GM12878 (cell line): ENCODE measurements at regions of chr2 and their contacts with region 1.

Region 1: DNA sequence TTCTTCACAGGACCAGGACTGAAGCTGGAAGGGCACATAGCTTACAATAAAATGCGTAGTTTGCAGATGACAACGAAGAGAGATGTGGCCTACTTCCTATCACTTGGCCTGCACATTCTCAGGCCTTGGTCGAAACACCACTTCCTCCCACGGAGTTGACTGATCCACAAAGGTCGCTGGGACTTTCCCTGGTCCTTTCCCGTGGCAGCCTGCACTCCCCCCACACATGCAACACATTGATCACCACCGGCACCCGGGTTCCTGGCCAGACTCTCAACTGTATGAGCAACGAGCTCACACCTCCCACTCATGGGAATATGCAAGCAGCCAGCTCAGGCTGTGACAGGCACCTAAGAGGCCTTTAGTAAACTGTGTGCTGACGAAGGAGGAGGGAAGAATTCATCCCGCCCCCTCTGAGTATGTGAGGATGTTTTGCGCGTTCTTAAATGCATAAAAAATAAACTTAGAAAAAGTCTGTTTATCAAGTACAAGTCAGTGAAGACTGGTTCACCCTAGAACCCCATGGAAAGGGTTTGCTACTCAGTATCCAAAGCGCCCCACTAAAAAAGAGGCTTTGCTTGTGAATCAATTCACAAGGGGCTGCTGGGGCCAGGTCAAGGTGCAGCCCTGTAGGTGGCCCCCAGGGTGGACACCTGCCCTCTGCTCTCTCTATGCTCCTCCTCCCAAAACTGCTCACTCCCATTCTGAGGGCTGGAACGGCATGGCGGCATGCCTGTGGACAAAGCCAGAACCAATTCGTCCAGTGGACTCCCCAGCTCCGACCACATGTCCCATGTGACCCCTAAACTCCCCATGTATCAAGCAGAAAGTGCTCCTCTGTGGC is 154.3 kb downstream of the EIPR1 start:
- DNase-seq: peak; percentile 91
- ATAC-seq: peak; percentile 94
- H3K4me3 ChIP-seq: no peak overlapping the region
- H3K27ac ChIP-seq: peak overlapping the region; percentile 89
- H3K4me1 ChIP-seq: peaks cover 20% of the 10 kb centered on the region
- H3K27me3 ChIP-seq: no peaks in the 10 kb centered on the region
- CTCF ChIP-seq: no peak
- EP300 ChIP-seq: peak; percentile 80 to 87; a peak in 3 of 4 replicates
- POLR2A ChIP-seq: peak; percentile 57
- RAD21 ChIP-seq: peak; percentile 12; the same call in 1 of the 2 replicates

Region 2: GRCh38 chr2:2974982-2975381 is 248.3 kb before region 1 on chr2:
- CTCF ChIA-PET with region 1: no interaction called
- POLR2A ChIA-PET with region 1: no interaction called
- RAD21 ChIA-PET with region 1: no interaction called
- SMC1A ChIA-PET with region 1: no interaction called
- in situ Hi-C with region 1: no loop called
- intact Hi-C with region 1: no loop called
- DNase-seq: no peak
- ATAC-seq: no peak
- H3K4me3 ChIP-seq: no peak overlapping the region
- H3K27ac ChIP-seq: no peak overlapping the region
- H3K4me1 ChIP-seq: no peaks in the 10 kb centered on the region
- H3K27me3 ChIP-seq: no peaks in the 10 kb centered on the region; a peak in 1 of 4 replicates
- CTCF ChIP-seq: no peak
- EP300 ChIP-seq: no peak
- POLR2A ChIP-seq: no peak
- RAD21 ChIP-seq: no peak

Region 3: DNA sequence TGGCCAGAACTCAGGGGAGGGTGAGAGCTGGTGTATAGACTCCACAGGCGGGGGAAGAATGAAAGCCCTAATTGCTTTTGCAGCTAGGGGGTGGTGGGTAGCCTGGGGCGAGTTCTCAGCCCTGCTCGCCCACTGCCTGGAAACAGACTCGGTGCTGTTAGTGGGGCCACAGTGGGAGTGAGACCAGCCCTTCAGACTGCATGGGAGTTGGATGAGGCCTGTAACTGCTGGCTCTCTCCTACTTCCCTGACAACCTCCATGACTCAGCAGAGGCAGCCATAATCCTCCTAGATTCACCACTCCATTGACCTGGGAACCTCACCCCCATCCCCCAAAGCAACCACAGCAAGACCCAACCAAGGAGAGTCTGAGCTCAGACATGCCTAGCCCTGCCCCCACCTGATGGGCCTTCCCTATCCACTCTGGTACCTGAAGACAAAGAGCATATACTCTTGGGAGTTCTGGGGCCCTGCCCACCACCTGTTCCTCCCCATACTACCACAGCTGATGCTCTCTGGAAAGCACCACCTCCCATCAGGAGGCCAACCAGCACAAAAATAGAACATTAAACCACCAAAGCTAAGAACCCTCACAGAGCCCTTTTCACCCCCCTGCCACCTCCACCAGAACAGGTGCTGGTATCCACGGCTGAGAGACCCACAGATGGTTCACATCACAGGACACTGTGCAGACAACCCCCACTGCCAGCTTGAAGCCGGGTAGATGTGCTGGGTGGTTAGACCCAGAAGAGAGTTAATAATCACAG is 72.0 kb before region 1 on chr2:
- CTCF ChIA-PET with region 1: no interaction called
- POLR2A ChIA-PET with region 1: no interaction called
- RAD21 ChIA-PET with region 1: interaction called, 5 read pairs
- SMC1A ChIA-PET with region 1: interaction called, 5 read pairs
- in situ Hi-C with region 1: no loop called
- intact Hi-C with region 1: loop called (anchors 2 kb)
- DNase-seq: peak; percentile 60
- ATAC-seq: peak; percentile 64
- H3K4me3 ChIP-seq: no peak overlapping the region
- H3K27ac ChIP-seq: peak overlapping the region; percentile 46
- H3K4me1 ChIP-seq: peaks cover 14% of the 10 kb centered on the region
- H3K27me3 ChIP-seq: no peaks in the 10 kb centered on the region
- CTCF ChIP-seq: no peak
- EP300 ChIP-seq: no peak
- POLR2A ChIP-seq: no peak
- RAD21 ChIP-seq: no peak

Region 4: GRCh38 chr2:3242747-3243369 is 19.6 kb after region 1 on chr2:
- CTCF ChIA-PET with region 1: interaction called, 5 read pairs
- POLR2A ChIA-PET with region 1: no interaction called
- RAD21 ChIA-PET with region 1: interaction called, 11 read pairs
- SMC1A ChIA-PET with region 1: interaction called, 25 read pairs
- in situ Hi-C with region 1: no loop called
- intact Hi-C with region 1: no loop called
- DNase-seq: peak; percentile 34
- ATAC-seq: peak; percentile 79
- H3K4me3 ChIP-seq: no peak overlapping the region
- H3K27ac ChIP-seq: no peak overlapping the region; the same call in 1 of the 2 replicates
- H3K4me1 ChIP-seq: peaks cover 25% of the 10 kb centered on the region
- H3K27me3 ChIP-seq: no peaks in the 10 kb centered on the region
- CTCF ChIP-seq: no peak
- EP300 ChIP-seq: no peak
- POLR2A ChIP-seq: no peak
- RAD21 ChIP-seq: no peak

Region 5: GRCh38 chr2:3254442-3254941 is 31.2 kb after region 1 on chr2:
- CTCF ChIA-PET with region 1: interaction called, 5 read pairs
- POLR2A ChIA-PET with region 1: interaction called, 4 read pairs
- RAD21 ChIA-PET with region 1: interaction called, 18 read pairs
- SMC1A ChIA-PET with region 1: interaction called, 7 read pairs
- in situ Hi-C with region 1: no loop called
- intact Hi-C with region 1: loop called (anchors 1 kb)
- DNase-seq: peak; percentile 39
- ATAC-seq: peak; percentile 88
- H3K4me3 ChIP-seq: no peak overlapping the region
- H3K27ac ChIP-seq: peak overlapping the region; percentile 69
- H3K4me1 ChIP-seq: peaks cover 16% of the 10 kb centered on the region
- H3K27me3 ChIP-seq: no peaks in the 10 kb centered on the region
- CTCF ChIP-seq: no peak
- EP300 ChIP-seq: peak; percentile 87 to 96; a peak in 2 of 4 replicates
- POLR2A ChIP-seq: no peak
- RAD21 ChIP-seq: no peak

Region 6: DNA sequence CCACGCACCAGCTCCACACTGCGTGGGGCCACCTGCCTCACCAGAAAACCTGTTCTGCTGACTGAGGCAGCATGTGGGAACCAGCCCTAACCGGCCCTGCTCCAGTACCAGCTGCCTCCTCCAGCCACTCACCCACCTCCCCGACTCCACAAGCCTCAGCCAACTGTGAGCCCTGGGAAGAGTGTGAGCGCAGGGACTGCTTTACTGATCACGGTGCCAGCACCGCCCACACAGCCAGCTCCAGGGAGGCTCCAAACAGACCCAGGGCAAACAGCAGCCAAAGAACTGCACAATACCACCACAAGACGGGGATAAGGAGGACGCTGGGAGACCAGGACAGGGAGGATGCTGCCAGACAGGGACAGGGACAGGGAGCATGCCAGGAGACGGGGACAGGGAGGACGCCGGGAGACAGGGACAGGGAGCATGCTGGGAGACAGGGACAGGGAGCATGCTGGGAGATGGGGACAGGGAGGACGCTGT is 126.0 kb after region 1 on chr2:
- CTCF ChIA-PET with region 1: no interaction called
- POLR2A ChIA-PET with region 1: no interaction called
- RAD21 ChIA-PET with region 1: no interaction called
- SMC1A ChIA-PET with region 1: no interaction called
- in situ Hi-C with region 1: no loop called
- intact Hi-C with region 1: no loop called
- DNase-seq: no peak
- ATAC-seq: no peak
- H3K4me3 ChIP-seq: no peak overlapping the region
- H3K27ac ChIP-seq: no peak overlapping the region
- H3K4me1 ChIP-seq: no peaks in the 10 kb centered on the region
- H3K27me3 ChIP-seq: no peaks in the 10 kb centered on the region
- CTCF ChIP-seq: no peak
- EP300 ChIP-seq: no peak
- POLR2A ChIP-seq: no peak
- RAD21 ChIP-seq: no peak